CD4-positive, alpha-beta T cell (primary cell): ENCODE measurements at regions of chr12 and their contacts with region 1.

Region 1: GRCh38 chr12:47207340-47207717 is 127.6 kb upstream of the AMIGO2 start:
- DNase-seq: peak in 8 of 14 experiments; percentile 18 to 77 (median 44)
- ATAC-seq: peak; percentile 56
- H3K4me3 ChIP-seq: peak overlapping the region; percentile 32
- H3K4me3 Mint-ChIP-seq: peak overlapping the region; percentile 67
- H3K27ac ChIP-seq: peak overlapping the region; percentile 65 to 71
- H3K27ac Mint-ChIP-seq: peak overlapping the region; percentile 88
- H3K4me1 ChIP-seq: peaks cover 71% of the 10 kb centered on the region
- H3K4me1 Mint-ChIP-seq: peaks cover 88% of the 10 kb centered on the region
- H3K27me3 ChIP-seq: no peaks in the 10 kb centered on the region
- H3K27me3 Mint-ChIP-seq: no peaks in the 10 kb centered on the region
- CTCF ChIP-seq: no peak

Region 2: GRCh38 chr12:46998811-46999368 is 208.4 kb before region 1 on chr12:
- CTCF ChIA-PET with region 1: no interaction called
- POLR2A ChIA-PET with region 1: no interaction called
- intact Hi-C with region 1: no loop called
- DNase-seq: no peak
- ATAC-seq: no peak
- H3K4me3 ChIP-seq: no peak overlapping the region
- H3K4me3 Mint-ChIP-seq: no peak overlapping the region
- H3K27ac ChIP-seq: no peak overlapping the region
- H3K27ac Mint-ChIP-seq: no peak overlapping the region
- H3K4me1 ChIP-seq: no peaks in the 10 kb centered on the region
- H3K4me1 Mint-ChIP-seq: no peaks in the 10 kb centered on the region
- H3K27me3 ChIP-seq: no peaks in the 10 kb centered on the region
- H3K27me3 Mint-ChIP-seq: peaks cover 9% of the 10 kb centered on the region
- CTCF ChIP-seq: no peak

Region 3: DNA sequence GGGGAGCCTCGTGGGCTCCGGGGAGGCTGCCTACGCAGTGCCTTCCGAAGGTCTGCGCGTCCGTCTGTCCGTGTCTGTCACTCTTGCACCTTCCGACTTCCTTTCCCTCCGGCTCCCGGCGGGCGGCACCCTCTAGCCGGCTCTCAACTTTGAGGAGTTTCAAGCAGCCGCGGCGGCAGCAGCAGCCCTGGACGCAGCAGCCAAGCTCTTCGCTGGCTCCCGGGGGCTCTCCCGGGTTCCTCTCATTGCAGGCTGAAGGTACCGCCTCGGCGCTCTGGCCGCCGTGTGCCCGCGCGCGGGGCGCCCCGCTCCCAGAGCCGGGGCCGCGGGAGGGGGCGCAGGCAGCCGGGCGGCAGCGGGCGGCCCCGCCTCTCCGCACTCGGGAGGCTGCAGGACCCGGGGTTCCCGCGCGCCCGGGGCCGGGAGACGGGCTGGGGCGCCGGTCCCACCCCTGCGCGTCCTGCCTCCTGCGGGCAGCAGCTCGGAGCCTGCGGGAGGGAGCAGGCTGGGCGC is 127.8 kb before region 1 on chr12 and contains the starts of genes AMIGO2 and PCED1B:
- CTCF ChIA-PET with region 1: interaction called, 5 read pairs
- POLR2A ChIA-PET with region 1: interaction called, 43 read pairs
- intact Hi-C with region 1: no loop called
- DNase-seq: peak; percentile 30 to 79 (median 62)
- ATAC-seq: peak; percentile 52
- H3K4me3 ChIP-seq: peak within 1 kb of the TSS; percentile 84
- H3K4me3 Mint-ChIP-seq: peak within 1 kb of the TSS; percentile 95
- H3K27ac ChIP-seq: peak within 1 kb of the TSS; percentile 50 to 80
- H3K27ac Mint-ChIP-seq: peak within 1 kb of the TSS; percentile 98
- H3K4me1 ChIP-seq: peaks cover 34% of the 10 kb centered on the region
- H3K4me1 Mint-ChIP-seq: peaks cover 86% of the 10 kb centered on the region
- H3K27me3 ChIP-seq: no peaks in the 10 kb centered on the region
- H3K27me3 Mint-ChIP-seq: no peaks in the 10 kb centered on the region
- CTCF ChIP-seq: peak; percentile 37
- total RNA-seq, gene AMIGO2: 9.7 to 10.1 TPM
- total RNA-seq, gene PCED1B: 18.7 to 20.0 TPM

Region 4: GRCh38 chr12:47145188-47145587 is 62.1 kb before region 1 on chr12:
- CTCF ChIA-PET with region 1: no interaction called
- POLR2A ChIA-PET with region 1: interaction called, 13 read pairs
- intact Hi-C with region 1: no loop called
- DNase-seq: peak in 3 of 14 experiments; percentile 25 to 41 (median 30)
- ATAC-seq: peak; percentile 90
- H3K4me3 ChIP-seq: no peak overlapping the region
- H3K4me3 Mint-ChIP-seq: peak overlapping the region; percentile 54
- H3K27ac ChIP-seq: peak overlapping the region; percentile 8 to 39
- H3K27ac Mint-ChIP-seq: peak overlapping the region; percentile 85
- H3K4me1 ChIP-seq: peaks cover 4% of the 10 kb centered on the region
- H3K4me1 Mint-ChIP-seq: peaks cover 34% of the 10 kb centered on the region
- H3K27me3 ChIP-seq: no peaks in the 10 kb centered on the region
- H3K27me3 Mint-ChIP-seq: no peaks in the 10 kb centered on the region
- CTCF ChIP-seq: no peak

Region 5: DNA sequence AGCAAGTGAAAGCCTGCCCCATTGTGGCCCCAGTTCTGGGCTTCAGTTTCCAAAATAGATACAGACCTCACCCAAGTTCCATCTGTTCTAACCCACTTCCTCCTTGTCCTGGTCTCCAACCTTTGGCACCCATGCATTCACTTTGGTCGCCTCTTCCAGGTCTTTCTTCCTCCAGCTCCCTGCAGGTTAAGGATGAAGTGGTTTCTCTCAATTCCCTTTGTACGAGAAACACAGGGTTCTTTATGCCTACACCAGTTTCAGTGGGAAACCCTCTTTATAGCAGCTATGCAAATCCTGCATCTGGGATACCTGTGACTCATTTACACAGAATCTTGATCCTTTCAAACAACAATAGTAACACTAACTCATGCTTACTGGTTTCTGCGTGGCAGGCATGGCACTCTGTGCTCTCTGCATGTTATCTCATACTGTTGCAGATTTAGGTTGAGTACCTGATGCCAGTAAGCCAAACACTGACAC is 17.0 kb before region 1 on chr12:
- CTCF ChIA-PET with region 1: interaction called, 7 read pairs
- POLR2A ChIA-PET with region 1: interaction called, 44 read pairs
- intact Hi-C with region 1: loop called in 1 of 2 experiments (anchors 2 kb)
- DNase-seq: peak in 1 of 14 experiments; percentile 37
- ATAC-seq: no peak
- H3K4me3 ChIP-seq: no peak overlapping the region
- H3K4me3 Mint-ChIP-seq: no peak overlapping the region
- H3K27ac ChIP-seq: peak overlapping the region; percentile 14 to 16
- H3K27ac Mint-ChIP-seq: peak overlapping the region; percentile 87
- H3K4me1 ChIP-seq: peaks cover 63% of the 10 kb centered on the region
- H3K4me1 Mint-ChIP-seq: peaks cover 90% of the 10 kb centered on the region
- H3K27me3 ChIP-seq: no peaks in the 10 kb centered on the region
- H3K27me3 Mint-ChIP-seq: no peaks in the 10 kb centered on the region
- CTCF ChIP-seq: no peak

Region 6: GRCh38 chr12:47276621-47277309 is 69.4 kb after region 1 on chr12:
- CTCF ChIA-PET with region 1: no interaction called
- POLR2A ChIA-PET with region 1: interaction called, 23 read pairs
- intact Hi-C with region 1: no loop called
- DNase-seq: peak; percentile 26 to 94 (median 50)
- ATAC-seq: peak; percentile 96
- H3K4me3 ChIP-seq: no peak overlapping the region
- H3K4me3 Mint-ChIP-seq: peak overlapping the region; percentile 61
- H3K27ac ChIP-seq: peak overlapping the region; percentile 72 to 81
- H3K27ac Mint-ChIP-seq: peak overlapping the region; percentile 90
- H3K4me1 ChIP-seq: peaks cover 40% of the 10 kb centered on the region
- H3K4me1 Mint-ChIP-seq: peaks cover 83% of the 10 kb centered on the region
- H3K27me3 ChIP-seq: no peaks in the 10 kb centered on the region
- H3K27me3 Mint-ChIP-seq: no peaks in the 10 kb centered on the region
- CTCF ChIP-seq: no peak

Region 7: GRCh38 chr12:47361389-47362021 is 154.2 kb after region 1 on chr12:
- CTCF ChIA-PET with region 1: no interaction called
- POLR2A ChIA-PET with region 1: interaction called, 16 read pairs
- intact Hi-C with region 1: no loop called
- DNase-seq: peak in 11 of 14 experiments; percentile 3 to 74 (median 37)
- ATAC-seq: peak; percentile 41
- H3K4me3 ChIP-seq: peak overlapping the region; percentile 40
- H3K4me3 Mint-ChIP-seq: peak overlapping the region; percentile 86
- H3K27ac ChIP-seq: peak overlapping the region; percentile 67 to 75
- H3K27ac Mint-ChIP-seq: peak overlapping the region; percentile 98
- H3K4me1 ChIP-seq: peaks cover 56% of the 10 kb centered on the region
- H3K4me1 Mint-ChIP-seq: peaks cover 65% of the 10 kb centered on the region
- H3K27me3 ChIP-seq: no peaks in the 10 kb centered on the region
- H3K27me3 Mint-ChIP-seq: no peaks in the 10 kb centered on the region
- CTCF ChIP-seq: no peak

Region 8: GRCh38 chr12:47397664-47398281 is 190.4 kb after region 1 on chr12:
- CTCF ChIA-PET with region 1: interaction called, 14 read pairs
- POLR2A ChIA-PET with region 1: interaction called, 6 read pairs
- intact Hi-C with region 1: loop called in 1 of 2 experiments (anchors 5 kb)
- DNase-seq: peak in 11 of 14 experiments; percentile 5 to 80 (median 33)
- ATAC-seq: peak; percentile 91
- H3K4me3 ChIP-seq: no peak overlapping the region
- H3K4me3 Mint-ChIP-seq: peak overlapping the region; percentile 49
- H3K27ac ChIP-seq: peak overlapping the region in 1 of 2 donors; percentile 23
- H3K27ac Mint-ChIP-seq: peak overlapping the region; percentile 63
- H3K4me1 ChIP-seq: peaks cover 40% of the 10 kb centered on the region
- H3K4me1 Mint-ChIP-seq: peaks cover 53% of the 10 kb centered on the region
- H3K27me3 ChIP-seq: no peaks in the 10 kb centered on the region
- H3K27me3 Mint-ChIP-seq: no peaks in the 10 kb centered on the region
- CTCF ChIP-seq: peak; percentile 66